ENCODE measurements at regions of chr16 and their contacts with region 1.

Region 1: GRCh38 chr16:1261131-1261892 is 5.4 kb downstream of the TPSD1 start:
- DNase-seq: no peak
- H3K4me3 ChIP-seq: no peak overlapping the region
- H3K27ac ChIP-seq: no peak overlapping the region
- H3K4me1 ChIP-seq: no peaks in the 10 kb centered on the region
- H3K27me3 ChIP-seq: no peaks in the 10 kb centered on the region
- CTCF ChIP-seq: no peak

Region 2: GRCh38 chr16:1216296-1216619 is 45.1 kb before region 1 on chr16:
- intact Hi-C with region 1: loop called (anchors 10 kb)
- DNase-seq: no peak
- H3K4me3 ChIP-seq: no peak overlapping the region
- H3K27ac ChIP-seq: no peak overlapping the region
- H3K4me1 ChIP-seq: no peaks in the 10 kb centered on the region
- H3K27me3 ChIP-seq: no peaks in the 10 kb centered on the region
- CTCF ChIP-seq: no peak

Region 3: GRCh38 chr16:1300664-1301476 is 39.6 kb after region 1 on chr16:
- intact Hi-C with region 1: no loop called
- DNase-seq: peak in 1 of 2 donors; percentile 76
- H3K4me3 ChIP-seq: peak overlapping the region in 1 of 2 donors; percentile 12
- H3K27ac ChIP-seq: no peak overlapping the region
- H3K4me1 ChIP-seq: peaks cover 0 to 4% of the 10 kb centered on the region in 2 donors
- H3K27me3 ChIP-seq: peaks cover 9% of the 10 kb centered on the region
- CTCF ChIP-seq: peak; percentile 50 to 78 (median 69)

Region 4: DNA sequence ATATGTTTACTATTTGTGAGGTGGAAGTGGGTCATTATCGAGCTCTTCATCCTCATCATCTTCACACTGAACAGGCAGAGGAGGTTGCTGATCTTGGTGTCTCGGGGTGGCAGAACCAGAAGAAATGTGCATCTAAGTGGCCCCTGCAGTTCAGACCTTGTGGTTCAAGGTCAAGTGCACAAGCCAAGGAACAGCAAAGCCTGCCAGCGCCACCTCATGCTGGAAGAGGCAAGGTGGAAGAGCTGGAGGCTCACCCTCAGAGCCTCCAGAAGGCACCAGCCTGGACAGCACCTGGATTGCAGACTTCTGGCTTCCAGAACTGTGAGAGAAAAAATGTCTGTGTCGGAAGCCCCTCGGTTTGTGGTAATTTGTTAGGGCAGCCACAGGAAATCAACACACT is 317.9 kb after region 1 on chr16:
- intact Hi-C with region 1: no loop called
- DNase-seq: no peak
- H3K4me3 ChIP-seq: no peak overlapping the region
- H3K27ac ChIP-seq: no peak overlapping the region
- H3K4me1 ChIP-seq: no peaks in the 10 kb centered on the region
- H3K27me3 ChIP-seq: no peaks in the 10 kb centered on the region
- CTCF ChIP-seq: no peak

Measured in ascending aorta (tissue), 2 donors.